Gastrocnemius medialis (tissue), 4 donors: ENCODE measurements at regions of chr14 and their contacts with region 1.

Region 1: GRCh38 chr14:96304956-96305355 is 48.9 kb downstream of the BDKRB1 start:
- DNase-seq: no peak
- ATAC-seq: no peak
- H3K4me3 ChIP-seq: no peak overlapping the region
- H3K27ac ChIP-seq: no peak overlapping the region
- H3K4me1 ChIP-seq: no peaks in the 10 kb centered on the region
- H3K27me3 ChIP-seq: no peaks in the 10 kb centered on the region
- CTCF ChIP-seq: no peak
- POLR2A ChIP-seq: no peak

Region 2: GRCh38 chr14:96338551-96338950 is 33.6 kb after region 1 on chr14:
- in situ Hi-C with region 1: no loop called
- intact Hi-C with region 1: loop called (anchors 5 kb)
- DNase-seq: no peak
- ATAC-seq: no peak
- H3K4me3 ChIP-seq: no peak overlapping the region
- H3K27ac ChIP-seq: no peak overlapping the region
- H3K4me1 ChIP-seq: no peaks in the 10 kb centered on the region
- H3K27me3 ChIP-seq: no peaks in the 10 kb centered on the region
- CTCF ChIP-seq: no peak
- POLR2A ChIP-seq: no peak

Region 3: GRCh38 chr14:96538097-96538989 is 233.4 kb after region 1 on chr14:
- in situ Hi-C with region 1: loop called in 1 of 4 experiments (anchors 25 kb)
- intact Hi-C with region 1: no loop called
- DNase-seq: no peak
- ATAC-seq: no peak
- H3K4me3 ChIP-seq: no peak overlapping the region
- H3K27ac ChIP-seq: no peak overlapping the region
- H3K4me1 ChIP-seq: no peaks in the 10 kb centered on the region
- H3K27me3 ChIP-seq: no peaks in the 10 kb centered on the region
- CTCF ChIP-seq: no peak
- POLR2A ChIP-seq: no peak

Region 4: DNA sequence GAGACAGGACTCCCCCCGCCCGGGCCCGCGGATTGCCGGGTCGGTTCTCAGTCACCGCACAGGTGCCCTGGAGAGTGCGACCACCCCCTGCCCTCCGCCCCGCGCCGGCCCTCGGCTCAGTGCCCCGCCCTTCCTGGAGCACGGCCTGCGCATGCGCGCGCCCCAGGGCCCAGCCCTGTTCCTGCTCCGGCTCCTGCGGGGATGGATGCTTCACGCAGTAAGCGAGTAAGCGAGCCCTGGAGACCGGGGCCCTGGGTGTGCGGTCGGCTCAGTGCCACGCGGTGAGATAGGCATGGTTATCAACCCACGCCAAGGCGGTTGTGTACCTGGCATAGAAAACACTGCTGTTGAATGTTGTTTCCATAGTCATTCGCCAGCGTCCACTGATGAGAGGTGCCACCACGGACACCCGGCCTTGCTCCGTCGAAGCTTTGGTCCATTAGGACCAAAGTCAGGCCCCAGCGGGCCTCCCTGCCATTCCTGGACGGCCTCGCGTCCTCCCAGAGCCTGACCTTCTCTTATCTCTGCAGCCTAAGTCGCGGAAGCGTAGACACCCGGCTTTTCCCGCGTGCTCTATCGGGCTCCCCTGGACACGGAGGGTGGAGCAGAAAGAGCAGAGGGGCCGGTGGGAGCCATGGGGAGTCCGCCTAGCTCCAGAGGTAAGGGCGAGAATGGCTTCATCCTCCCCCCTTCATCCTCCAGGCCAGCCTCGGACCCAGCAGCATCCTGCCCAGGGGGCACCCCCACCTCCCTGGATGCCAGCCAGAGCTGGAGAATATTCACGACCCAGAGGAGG is 287.8 kb after region 1 on chr14:
- in situ Hi-C with region 1: no loop called
- intact Hi-C with region 1: no loop called
- DNase-seq: no peak
- ATAC-seq: no peak
- H3K4me3 ChIP-seq: peak overlapping the region in 2 of 4 donors; percentile 17 to 21
- H3K27ac ChIP-seq: no peak overlapping the region
- H3K4me1 ChIP-seq: peaks cover 0 to 3% of the 10 kb centered on the region in 2 donors
- H3K27me3 ChIP-seq: peaks cover 22 to 36% (median 28%) of the 10 kb centered on the region in 3 donors
- CTCF ChIP-seq: no peak
- POLR2A ChIP-seq: no peak